MCF 10A (cell line): ENCODE measurements at regions of chr20 and their contacts with region 1.

Region 1: DNA sequence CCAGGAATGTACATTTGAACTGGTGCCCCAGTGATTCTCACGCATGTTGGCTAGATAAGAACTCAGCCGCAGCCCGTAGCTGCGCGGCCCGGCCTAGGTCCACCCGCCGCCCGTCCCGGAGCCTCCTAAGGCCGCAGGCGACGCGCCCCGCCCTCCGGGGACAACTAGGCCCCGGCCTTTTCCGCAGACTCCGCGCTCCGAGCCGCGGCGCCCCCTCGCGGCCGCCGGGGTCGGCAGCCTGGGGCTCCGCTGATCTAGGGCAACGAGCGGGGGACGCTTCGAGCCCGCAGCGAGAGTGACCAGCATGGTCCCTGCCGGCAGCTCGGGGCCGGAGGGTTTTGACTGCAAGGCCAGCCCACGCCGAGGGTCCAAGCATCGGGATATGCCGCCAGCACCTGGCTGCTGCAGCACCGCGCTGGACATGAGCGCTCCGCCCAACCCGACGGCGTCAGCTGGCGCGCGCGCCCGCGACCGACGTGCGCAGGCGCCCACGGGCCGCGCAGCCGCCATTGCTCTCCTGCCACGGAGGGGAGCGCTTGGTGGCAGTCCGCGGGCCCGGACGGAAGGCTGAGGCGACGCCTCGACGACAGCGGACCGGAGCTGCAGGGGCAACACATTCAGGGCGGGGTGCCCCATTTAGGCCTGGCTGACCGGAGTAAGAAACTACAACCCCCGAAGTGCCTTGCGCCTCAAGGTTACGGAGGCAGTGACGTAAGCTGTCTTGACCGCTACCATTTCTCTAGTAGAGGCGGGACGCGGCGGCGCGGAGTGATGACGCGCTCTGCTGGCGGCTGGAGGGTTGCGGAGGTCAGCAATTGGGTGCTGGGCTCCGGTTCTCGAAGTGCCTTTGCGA is at the start of gene AP5S1:
- DNase-seq: peak; percentile 96
- H3K4me3 Mint-ChIP-seq: peak within 1 kb of the TSS; percentile 93
- H3K27ac Mint-ChIP-seq: peak within 1 kb of the TSS; percentile 96
- H3K4me1 Mint-ChIP-seq: peaks cover 19% of the 10 kb centered on the region
- H3K27me3 Mint-ChIP-seq: no peaks in the 10 kb centered on the region
- CTCF ChIP-seq: peak; percentile 97
- total RNA-seq, gene AP5S1: 15.8 and 19.2 TPM in 2 replicates

Region 2: GRCh38 chr20:3716195-3716834 is 104.0 kb before region 1 on chr20:
- CTCF ChIA-PET with region 1: interaction called, 8 read pairs
- POLR2A ChIA-PET with region 1: no interaction called
- intact Hi-C with region 1: loop called (anchors 1 kb)
- DNase-seq: peak; percentile 59
- H3K4me3 Mint-ChIP-seq: no peak overlapping the region
- H3K27ac Mint-ChIP-seq: no peak overlapping the region
- H3K4me1 Mint-ChIP-seq: no peaks in the 10 kb centered on the region
- H3K27me3 Mint-ChIP-seq: peaks cover 18% of the 10 kb centered on the region
- CTCF ChIP-seq: peak; percentile 67

Region 3: GRCh38 chr20:3767427-3768341 is 52.6 kb before region 1 on chr20 and contains the start of gene ADISSP:
- CTCF ChIA-PET with region 1: interaction called, 10 read pairs
- POLR2A ChIA-PET with region 1: interaction called, 56 read pairs
- intact Hi-C with region 1: no loop called
- DNase-seq: peak; percentile 98
- H3K4me3 Mint-ChIP-seq: peak within 1 kb of the TSS; percentile 84
- H3K27ac Mint-ChIP-seq: peak within 1 kb of the TSS; percentile 91
- H3K4me1 Mint-ChIP-seq: peaks cover 18% of the 10 kb centered on the region
- H3K27me3 Mint-ChIP-seq: no peaks in the 10 kb centered on the region
- CTCF ChIP-seq: no peak
- total RNA-seq, gene ADISSP: 37.8 and 58.8 TPM in 2 replicates

Region 4: DNA sequence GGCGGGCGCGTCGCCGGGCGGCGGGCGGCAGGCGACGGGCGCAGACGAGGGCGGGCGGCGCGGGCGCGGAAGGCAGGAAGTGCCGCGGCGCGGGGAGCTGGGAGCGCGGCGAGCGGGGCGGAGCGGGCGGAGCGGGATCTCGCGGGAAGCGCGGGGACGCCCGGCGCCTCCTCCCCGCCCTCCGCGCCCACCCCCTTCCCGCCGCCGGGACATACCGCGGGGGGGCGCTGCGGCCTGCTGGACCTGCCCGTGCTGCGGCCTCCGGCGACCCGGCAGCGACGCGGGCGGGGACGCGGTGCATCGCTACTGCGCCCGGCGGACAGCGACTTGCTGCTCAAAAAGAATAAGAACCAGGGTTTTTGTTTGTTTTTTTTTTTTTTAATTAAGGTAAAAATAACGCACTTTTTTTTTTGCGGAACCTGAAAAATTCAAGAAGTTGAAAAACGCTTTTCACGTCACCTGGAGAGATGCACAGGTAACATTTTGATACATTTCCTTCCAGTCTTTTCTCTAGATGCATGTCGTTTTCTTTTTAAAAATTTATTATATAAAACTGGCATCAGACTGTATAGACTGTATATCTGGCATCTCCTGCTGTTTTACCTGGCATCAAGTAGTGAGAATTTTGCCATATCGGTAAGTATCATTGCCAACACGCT is 33.5 kb before region 1 on chr20 and contains the start of gene CENPB:
- CTCF ChIA-PET with region 1: interaction called, 231 read pairs
- POLR2A ChIA-PET with region 1: interaction called, 4 read pairs
- intact Hi-C with region 1: loop called (anchors 1 kb)
- DNase-seq: peak; percentile 84
- H3K4me3 Mint-ChIP-seq: peak within 1 kb of the TSS; percentile 76
- H3K27ac Mint-ChIP-seq: peak within 1 kb of the TSS; percentile 42
- H3K4me1 Mint-ChIP-seq: peaks cover 33% of the 10 kb centered on the region
- H3K27me3 Mint-ChIP-seq: no peaks in the 10 kb centered on the region
- CTCF ChIP-seq: peak; percentile 88
- total RNA-seq, gene CENPB: 51.5 and 54.8 TPM in 2 replicates

Region 5: DNA sequence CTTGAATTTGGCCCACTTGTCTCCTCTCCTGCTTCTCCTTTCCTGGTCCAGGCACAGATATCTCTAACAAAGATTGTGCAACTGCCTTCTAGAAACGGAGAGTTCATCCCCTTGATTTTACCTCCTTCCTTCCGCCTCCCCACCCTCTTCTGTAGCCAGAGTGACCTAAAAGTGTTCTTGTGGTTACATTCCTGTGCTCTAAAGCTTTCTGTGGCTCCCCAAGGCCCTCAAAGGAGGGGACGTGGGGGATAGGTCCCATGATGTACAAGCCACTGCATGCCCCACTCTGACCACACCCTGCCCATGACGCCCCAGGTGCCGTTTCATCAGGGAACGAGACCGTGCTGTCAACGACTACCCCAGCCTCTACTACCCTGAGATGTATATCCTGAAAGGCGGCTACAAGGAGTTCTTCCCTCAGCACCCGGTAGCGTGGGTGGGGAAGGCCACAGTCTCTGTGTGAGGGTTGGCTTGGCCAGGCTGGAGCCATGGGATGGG is 16.0 kb before region 1 on chr20:
- CTCF ChIA-PET with region 1: interaction called, 25 read pairs
- POLR2A ChIA-PET with region 1: interaction called, 10 read pairs
- intact Hi-C with region 1: no loop called
- DNase-seq: peak; percentile 86
- H3K4me3 Mint-ChIP-seq: peak overlapping the region; percentile 10
- H3K27ac Mint-ChIP-seq: peak overlapping the region; percentile 73
- H3K4me1 Mint-ChIP-seq: peaks cover 57% of the 10 kb centered on the region
- H3K27me3 Mint-ChIP-seq: no peaks in the 10 kb centered on the region
- CTCF ChIP-seq: no peak

Region 6: GRCh38 chr20:3846740-3847428 is 26.6 kb after region 1 on chr20 and contains the start of gene MAVS:
- CTCF ChIA-PET with region 1: interaction called, 30 read pairs
- POLR2A ChIA-PET with region 1: interaction called, 64 read pairs
- intact Hi-C with region 1: loop called (anchors 2 kb)
- DNase-seq: peak; percentile 86
- H3K4me3 Mint-ChIP-seq: peak within 1 kb of the TSS; percentile 83
- H3K27ac Mint-ChIP-seq: peak within 1 kb of the TSS; percentile 83
- H3K4me1 Mint-ChIP-seq: peaks cover 13% of the 10 kb centered on the region
- H3K27me3 Mint-ChIP-seq: no peaks in the 10 kb centered on the region
- CTCF ChIP-seq: no peak
- total RNA-seq, gene MAVS: 31.7 and 39.7 TPM in 2 replicates

Region 7: DNA sequence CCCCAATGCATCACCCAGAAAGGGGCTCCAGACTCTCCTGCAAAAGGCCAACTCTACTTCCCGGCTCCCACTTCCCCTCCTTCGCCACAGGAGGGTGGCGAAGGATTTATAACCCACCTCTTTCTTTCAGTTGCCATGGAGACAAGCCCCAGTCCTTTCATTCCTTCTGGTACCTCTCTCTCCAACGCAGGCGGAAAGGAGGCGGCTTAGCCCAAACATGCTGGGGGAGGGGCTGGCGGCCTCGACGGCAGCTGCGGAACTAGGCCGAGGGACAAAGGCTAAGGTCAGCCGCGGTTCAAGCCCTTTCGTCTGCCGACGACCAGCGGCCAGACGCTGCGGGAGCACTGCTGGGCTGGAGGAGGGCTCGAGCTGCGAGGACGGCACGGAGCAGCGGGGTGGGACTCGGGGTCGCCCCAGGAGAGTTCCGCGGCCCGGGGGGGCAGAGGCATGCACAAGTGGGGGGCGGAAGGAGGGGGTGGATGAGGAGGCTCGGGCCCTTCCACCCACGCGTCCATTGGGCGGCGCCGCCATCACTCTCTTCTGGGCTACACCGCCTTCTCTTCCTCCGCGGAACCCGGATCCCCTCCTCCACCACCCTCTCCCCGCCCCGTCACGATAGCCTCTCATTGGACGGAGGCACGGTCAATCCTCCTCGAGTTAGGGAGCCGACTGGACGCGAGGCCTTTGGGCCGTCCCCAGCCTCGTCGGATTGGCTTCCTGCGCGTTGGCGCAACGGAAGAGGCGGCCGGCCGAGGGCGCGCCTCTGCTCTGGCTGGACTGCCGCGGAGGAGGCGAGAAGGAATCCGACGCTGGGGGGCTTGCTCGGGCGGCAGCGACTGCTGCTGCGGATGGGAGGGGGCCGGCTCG is 68.6 kb after region 1 on chr20 and contains the start of gene PANK2:
- CTCF ChIA-PET with region 1: interaction called, 6 read pairs
- POLR2A ChIA-PET with region 1: interaction called, 19 read pairs
- intact Hi-C with region 1: no loop called
- DNase-seq: peak; percentile 99
- H3K4me3 Mint-ChIP-seq: peak within 1 kb of the TSS; percentile 91
- H3K27ac Mint-ChIP-seq: peak within 1 kb of the TSS; percentile 96
- H3K4me1 Mint-ChIP-seq: peaks cover 19% of the 10 kb centered on the region
- H3K27me3 Mint-ChIP-seq: no peaks in the 10 kb centered on the region
- CTCF ChIP-seq: peak; percentile 11
- total RNA-seq, gene PANK2: 29.2 and 32.8 TPM in 2 replicates

Region 8: DNA sequence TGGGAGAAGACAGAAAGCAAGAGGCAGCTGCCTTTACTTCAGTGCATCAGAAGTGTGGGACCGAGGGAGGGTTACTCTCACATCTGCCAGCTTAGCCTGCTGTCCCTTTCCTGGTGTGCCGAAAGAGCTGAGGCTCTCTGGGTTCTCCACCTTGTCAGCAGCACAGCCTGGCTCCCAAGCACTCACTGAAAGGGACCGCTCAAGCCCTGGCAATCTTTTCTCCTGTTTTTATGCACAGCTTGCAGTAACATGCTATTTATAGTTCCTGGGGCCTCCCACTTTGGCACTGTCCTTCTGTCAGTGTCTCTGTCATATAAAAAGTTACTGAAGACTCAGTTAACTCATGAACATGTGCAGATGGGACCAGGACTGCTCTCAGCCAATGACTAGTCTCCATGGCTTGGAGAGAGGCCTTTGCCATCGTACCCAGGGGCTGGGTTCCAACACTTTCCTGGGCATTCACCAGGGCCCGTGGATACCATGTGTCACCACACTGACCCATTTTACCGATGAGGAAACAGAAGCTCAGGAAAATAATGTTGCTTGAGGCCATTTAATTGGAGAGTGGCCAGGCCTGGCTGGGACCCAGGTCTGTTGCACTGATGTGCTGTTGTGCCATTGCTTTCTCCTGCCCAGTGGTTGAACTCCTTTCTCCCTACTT is 115.2 kb after region 1 on chr20:
- CTCF ChIA-PET with region 1: no interaction called
- POLR2A ChIA-PET with region 1: no interaction called
- intact Hi-C with region 1: no loop called
- DNase-seq: no peak
- H3K4me3 Mint-ChIP-seq: no peak overlapping the region
- H3K27ac Mint-ChIP-seq: no peak overlapping the region
- H3K4me1 Mint-ChIP-seq: peaks cover 5% of the 10 kb centered on the region
- H3K27me3 Mint-ChIP-seq: no peaks in the 10 kb centered on the region
- CTCF ChIP-seq: no peak

Region 9: GRCh38 chr20:4234128-4234527 is 413.9 kb after region 1 on chr20:
- CTCF ChIA-PET with region 1: no interaction called
- POLR2A ChIA-PET with region 1: no interaction called
- intact Hi-C with region 1: no loop called
- DNase-seq: peak; percentile 92
- H3K4me3 Mint-ChIP-seq: no peak overlapping the region
- H3K27ac Mint-ChIP-seq: no peak overlapping the region
- H3K4me1 Mint-ChIP-seq: peaks cover 11% of the 10 kb centered on the region
- H3K27me3 Mint-ChIP-seq: peaks cover 22% of the 10 kb centered on the region
- CTCF ChIP-seq: no peak